ENCODE measurements at regions of chr3 and their contacts with region 1.

Region 1: DNA sequence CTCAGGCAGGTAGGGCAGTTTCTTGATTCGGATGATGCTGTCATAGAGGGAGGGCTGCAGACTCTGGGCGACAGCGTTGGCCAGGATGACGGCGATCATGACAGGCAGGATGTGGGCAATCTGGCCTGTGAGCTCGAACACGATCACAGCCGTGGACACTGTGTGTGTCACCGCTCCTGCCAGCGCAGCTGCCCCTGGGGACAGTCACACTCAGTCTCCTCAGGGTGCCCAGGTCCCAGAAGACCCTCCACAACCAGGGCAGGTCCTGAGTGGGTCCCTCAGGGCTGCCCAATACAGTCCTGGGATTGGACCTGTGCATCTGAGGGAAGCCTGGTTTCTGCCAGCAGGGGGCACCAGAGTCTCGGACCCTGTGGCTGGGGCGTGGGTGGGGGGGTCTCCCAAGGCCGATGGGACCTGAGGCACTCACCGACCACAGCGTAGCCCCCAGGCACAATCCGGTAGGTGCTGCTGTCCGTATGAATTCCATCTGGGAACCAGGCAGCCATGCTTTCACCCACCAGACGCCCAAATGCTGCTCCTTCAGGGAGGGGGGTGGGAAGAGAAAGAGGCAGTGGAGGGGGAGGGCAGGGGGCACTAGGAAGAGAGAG is 7.2 kb downstream of the CLCN2 start:
- DNase-seq: peak in 3 of 5 donors; percentile 56 to 72 (median 64)
- H3K4me3 ChIP-seq: no peak overlapping the region
- H3K27ac ChIP-seq: no peak overlapping the region
- H3K4me1 ChIP-seq: peaks cover 13% of the 10 kb centered on the region
- H3K27me3 ChIP-seq: no peaks in the 10 kb centered on the region
- CTCF ChIP-seq: peak; percentile 23 to 44 (median 42)
- EP300 ChIP-seq: no peak
- POLR2A ChIP-seq: no peak

Region 2: DNA sequence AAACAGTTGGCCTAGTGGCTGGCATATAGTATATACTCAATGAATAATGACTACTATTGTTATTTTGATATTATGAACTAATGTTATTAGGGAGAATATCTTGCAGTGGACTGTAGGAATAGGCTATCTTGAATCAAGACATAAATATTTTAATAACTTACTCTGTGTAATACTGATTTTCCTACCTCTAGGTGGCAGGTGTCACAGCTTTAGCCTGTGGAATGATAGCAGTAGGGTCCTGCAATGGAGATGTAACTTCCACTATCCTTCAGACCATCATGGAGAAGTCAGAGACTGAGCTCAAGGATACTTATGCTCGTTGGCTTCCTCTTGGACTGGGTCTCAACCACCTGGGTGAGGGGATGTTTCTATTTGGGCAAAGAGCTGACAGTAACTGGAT is 48.6 kb before region 1 on chr3:
- intact Hi-C with region 1: loop called in 1 of 4 experiments (anchors 10 kb)
- DNase-seq: no peak
- H3K4me3 ChIP-seq: no peak overlapping the region
- H3K27ac ChIP-seq: no peak overlapping the region
- H3K4me1 ChIP-seq: no peaks in the 10 kb centered on the region
- H3K27me3 ChIP-seq: no peaks in the 10 kb centered on the region
- CTCF ChIP-seq: peak in 1 of 3 donors; percentile 6
- EP300 ChIP-seq: no peak
- POLR2A ChIP-seq: no peak